Stomach (tissue), 19 donors: ENCODE measurements at regions of chr3 and their contacts with region 1.

Region 1: GRCh38 chr3:45760878-45761711 is 35.2 kb downstream of the SLC6A20 start:
- DNase-seq: peak; percentile 50 to 86
- H3K4me3 ChIP-seq: no peak overlapping the region
- H3K27ac ChIP-seq: no peak overlapping the region
- H3K4me1 ChIP-seq: peaks cover 0 to 11% (median 6%) of the 10 kb centered on the region in 4 donors
- H3K27me3 ChIP-seq: peaks cover 0 to 14% (median 0%) of the 10 kb centered on the region in 3 donors
- CTCF ChIP-seq: peak in 5 of 7 experiments; percentile 59 to 77 (median 74)
- EP300 ChIP-seq: no peak
- POLR2A ChIP-seq: no peak

Region 2: GRCh38 chr3:45929042-45929679 is 168.1 kb after region 1 on chr3:
- intact Hi-C with region 1: loop called (anchors 10 kb)
- DNase-seq: peak; percentile 41 to 54
- H3K4me3 ChIP-seq: no peak overlapping the region
- H3K27ac ChIP-seq: no peak overlapping the region
- H3K4me1 ChIP-seq: no peaks in the 10 kb centered on the region
- H3K27me3 ChIP-seq: no peaks in the 10 kb centered on the region
- CTCF ChIP-seq: peak in 5 of 7 experiments; percentile 11 to 64 (median 46)
- EP300 ChIP-seq: no peak
- POLR2A ChIP-seq: no peak

Region 3: GRCh38 chr3:46017720-46018119 is 256.6 kb after region 1 on chr3:
- intact Hi-C with region 1: no loop called
- DNase-seq: no peak
- H3K4me3 ChIP-seq: no peak overlapping the region
- H3K27ac ChIP-seq: no peak overlapping the region
- H3K4me1 ChIP-seq: no peaks in the 10 kb centered on the region
- H3K27me3 ChIP-seq: no peaks in the 10 kb centered on the region
- CTCF ChIP-seq: no peak
- EP300 ChIP-seq: no peak
- POLR2A ChIP-seq: no peak